Ascending aorta (tissue), 2 donors: ENCODE measurements at regions of chr3 and their contacts with region 1.

Region 1: GRCh38 chr3:179260949-179261765 is 10.2 kb upstream of the KCNMB3 start:
- DNase-seq: peak in 1 of 2 donors; percentile 79
- H3K4me3 ChIP-seq: peak overlapping the region; percentile 67 to 72
- H3K27ac ChIP-seq: peak overlapping the region; percentile 35 to 61
- H3K4me1 ChIP-seq: no peaks in the 10 kb centered on the region
- H3K27me3 ChIP-seq: no peaks in the 10 kb centered on the region
- CTCF ChIP-seq: no peak

Region 2: GRCh38 chr3:179147873-179148615 is 113.1 kb before region 1 on chr3 and contains the start of gene PIK3CA:
- intact Hi-C with region 1: loop called (anchors 1 kb)
- DNase-seq: peak; percentile 90 to 98
- H3K4me3 ChIP-seq: peak within 1 kb of the TSS; percentile 95 to 97
- H3K27ac ChIP-seq: peak within 1 kb of the TSS; percentile 93 to 99
- H3K4me1 ChIP-seq: peaks cover 0 to 14% of the 10 kb centered on the region in 2 donors
- H3K27me3 ChIP-seq: no peaks in the 10 kb centered on the region
- CTCF ChIP-seq: no peak
- total RNA-seq, gene PIK3CA: 12.7 TPM